Colonic mucosa (tissue), 4 donors: ENCODE measurements at regions of chr10 and their contacts with region 1.

Region 1: GRCh38 chr10:22573820-22574569 is 140.4 kb downstream of the PIP4K2A start:
- DNase-seq: no peak
- H3K4me3 ChIP-seq: no peak overlapping the region
- H3K27ac ChIP-seq: no peak overlapping the region
- H3K4me1 ChIP-seq: no peaks in the 10 kb centered on the region
- H3K27me3 ChIP-seq: no peaks in the 10 kb centered on the region
- CTCF ChIP-seq: peak; percentile 29

Region 2: DNA sequence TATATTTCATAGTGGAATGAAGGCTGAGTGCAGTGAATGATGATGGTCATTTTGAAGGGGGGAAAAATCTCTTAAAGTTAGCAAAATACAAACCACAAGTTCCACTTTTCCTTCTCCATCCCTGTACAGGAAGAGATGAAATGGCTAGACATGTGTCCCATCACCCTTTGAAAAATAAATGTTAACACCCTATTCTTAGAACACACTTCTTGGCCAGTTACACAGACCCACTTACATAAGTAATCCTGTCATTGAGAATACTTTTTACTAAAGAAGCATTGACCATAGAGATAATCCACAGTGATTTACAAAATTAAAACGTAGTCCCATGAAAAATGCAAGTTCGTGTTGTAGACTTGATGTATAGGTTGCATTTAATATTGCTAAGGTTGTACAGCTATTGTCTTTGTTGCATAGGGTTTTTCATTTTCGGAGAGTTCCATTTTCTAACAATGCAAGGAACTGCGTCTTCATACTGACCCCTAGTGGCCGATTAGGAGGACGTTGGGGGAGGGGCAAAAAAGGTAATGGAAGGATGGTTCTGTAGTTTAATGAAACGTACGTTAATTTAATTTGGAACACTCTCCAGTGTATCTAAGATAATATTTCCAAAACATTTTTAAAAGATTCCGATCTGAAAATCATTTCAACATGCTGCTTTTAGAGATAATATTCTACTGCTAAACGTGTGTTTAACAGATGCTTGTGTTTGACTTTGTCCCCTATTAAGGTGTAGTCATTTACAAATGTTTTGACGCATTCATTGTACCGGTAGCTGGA is 414.8 kb after region 1 on chr10:
- intact Hi-C with region 1: loop called (anchors 10 kb)
- DNase-seq: peak; percentile 71
- H3K4me3 ChIP-seq: no peak overlapping the region
- H3K27ac ChIP-seq: no peak overlapping the region
- H3K4me1 ChIP-seq: no peaks in the 10 kb centered on the region
- H3K27me3 ChIP-seq: no peaks in the 10 kb centered on the region
- CTCF ChIP-seq: peak; percentile 88

Region 3: GRCh38 chr10:23067939-23068775 is 494.2 kb after region 1 on chr10:
- intact Hi-C with region 1: loop called (anchors 10 kb)
- DNase-seq: peak; percentile 85
- H3K4me3 ChIP-seq: no peak overlapping the region
- H3K27ac ChIP-seq: no peak overlapping the region
- H3K4me1 ChIP-seq: peaks cover 8% of the 10 kb centered on the region
- H3K27me3 ChIP-seq: no peaks in the 10 kb centered on the region
- CTCF ChIP-seq: peak; percentile 90